ENCODE measurements at regions of chr10 and their contacts with region 1.

Region 1: DNA sequence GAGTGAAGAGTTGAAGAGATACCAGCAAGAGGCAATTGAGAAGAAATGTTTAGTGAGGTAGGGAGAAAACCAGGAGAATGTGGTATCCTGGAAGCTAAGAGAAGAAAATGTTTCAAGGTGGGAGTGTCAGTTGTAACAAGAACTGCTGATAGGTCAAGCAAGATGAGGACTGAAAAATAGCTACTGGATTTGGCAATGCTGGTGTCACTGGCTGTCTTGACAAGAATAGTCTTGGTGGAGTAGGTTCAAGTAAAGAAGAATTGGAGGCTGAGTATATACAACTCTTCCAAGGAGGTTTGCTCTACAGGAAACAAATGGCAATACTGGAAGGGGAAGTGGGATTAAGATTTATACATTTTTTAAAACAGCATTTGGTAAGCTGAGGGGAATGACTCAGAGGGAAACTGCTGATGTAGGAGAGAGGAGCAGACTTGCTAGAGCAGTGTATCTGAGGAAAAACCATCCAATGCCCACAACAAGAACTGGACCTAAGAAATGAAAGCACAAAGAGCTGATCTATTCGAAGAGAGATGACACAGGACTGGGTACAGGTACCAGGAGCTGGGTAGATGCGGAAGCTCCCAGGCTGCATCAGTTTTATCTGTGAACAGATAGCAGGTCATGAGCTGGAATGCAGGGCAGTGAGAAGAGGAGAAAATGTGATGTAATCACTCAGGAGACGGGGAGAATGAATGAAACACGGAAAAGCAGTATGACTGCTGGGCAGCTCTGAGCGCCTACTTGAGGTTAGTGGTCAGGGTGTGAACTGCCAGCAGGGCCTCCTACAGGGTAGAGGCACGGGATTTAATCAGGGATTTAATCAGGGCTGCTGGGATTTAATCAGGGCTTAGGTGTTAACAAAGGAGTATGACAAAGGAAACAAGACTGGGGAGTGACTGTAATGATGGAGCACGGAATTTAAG is 34.5 kb downstream of the FAM25A start:
- DNase-seq: peak; percentile 85
- ATAC-seq: peak; percentile 95
- H3K4me3 ChIP-seq: no peak overlapping the region
- H3K27ac ChIP-seq: peak overlapping the region; percentile 44
- H3K4me1 ChIP-seq: peaks cover 9% of the 10 kb centered on the region
- H3K27me3 ChIP-seq: no peaks in the 10 kb centered on the region
- CTCF ChIP-seq: peak; percentile 46
- POLR2A ChIP-seq: no peak
- RAD21 ChIP-seq: peak; percentile 56

Region 2: GRCh38 chr10:86744067-86744725 is 310.4 kb before region 1 on chr10:
- CTCF ChIA-PET with region 1: no interaction called
- POLR2A ChIA-PET with region 1: no interaction called
- dilution Hi-C with region 1: no loop called
- in situ Hi-C with region 1: no loop called
- intact Hi-C with region 1: no loop called
- DNase-seq: no peak
- ATAC-seq: peak; percentile 25; the same call in 1 of the 2 replicates
- H3K4me3 ChIP-seq: no peak overlapping the region
- H3K27ac ChIP-seq: no peak overlapping the region
- H3K4me1 ChIP-seq: peaks cover 3% of the 10 kb centered on the region
- H3K27me3 ChIP-seq: no peaks in the 10 kb centered on the region
- CTCF ChIP-seq: no peak
- POLR2A ChIP-seq: no peak
- RAD21 ChIP-seq: no peak

Region 3: GRCh38 chr10:86918022-86918471 is 136.6 kb before region 1 on chr10:
- CTCF ChIA-PET with region 1: interaction called, 10 read pairs
- POLR2A ChIA-PET with region 1: no interaction called
- dilution Hi-C with region 1: no loop called
- in situ Hi-C with region 1: no loop called
- intact Hi-C with region 1: no loop called
- DNase-seq: peak; percentile 77
- ATAC-seq: peak; percentile 89
- H3K4me3 ChIP-seq: no peak overlapping the region
- H3K27ac ChIP-seq: peak overlapping the region; percentile 58
- H3K4me1 ChIP-seq: peaks cover 5% of the 10 kb centered on the region
- H3K27me3 ChIP-seq: no peaks in the 10 kb centered on the region
- CTCF ChIP-seq: no peak
- POLR2A ChIP-seq: no peak
- RAD21 ChIP-seq: no peak

Region 4: DNA sequence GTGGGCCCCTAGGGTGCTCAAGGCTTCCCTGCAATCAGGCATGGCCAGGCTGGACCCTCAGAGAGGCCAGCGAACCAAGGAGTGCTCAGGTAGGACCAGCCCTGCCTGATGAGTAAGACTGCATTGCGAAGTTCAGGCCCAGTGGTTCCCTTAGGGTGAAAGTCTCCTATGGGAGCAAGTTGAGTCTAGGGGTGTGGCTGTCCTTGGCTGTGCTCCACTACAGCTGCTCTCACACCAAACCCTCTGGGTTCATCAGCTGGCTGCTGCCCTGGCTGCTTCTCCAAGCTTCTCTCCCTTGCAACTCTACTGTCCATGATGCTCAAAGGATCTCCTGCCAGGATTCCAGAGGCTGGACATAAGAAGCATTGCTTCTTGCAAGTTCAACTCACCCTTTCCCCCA is 15.8 kb before region 1 on chr10:
- CTCF ChIA-PET with region 1: no interaction called
- POLR2A ChIA-PET with region 1: no interaction called
- dilution Hi-C with region 1: no loop called
- in situ Hi-C with region 1: no loop called
- intact Hi-C with region 1: no loop called
- DNase-seq: no peak
- ATAC-seq: no peak
- H3K4me3 ChIP-seq: no peak overlapping the region
- H3K27ac ChIP-seq: no peak overlapping the region
- H3K4me1 ChIP-seq: no peaks in the 10 kb centered on the region
- H3K27me3 ChIP-seq: no peaks in the 10 kb centered on the region; the same call in 1 of the 2 replicates
- CTCF ChIP-seq: no peak
- POLR2A ChIP-seq: no peak
- RAD21 ChIP-seq: no peak

Region 5: DNA sequence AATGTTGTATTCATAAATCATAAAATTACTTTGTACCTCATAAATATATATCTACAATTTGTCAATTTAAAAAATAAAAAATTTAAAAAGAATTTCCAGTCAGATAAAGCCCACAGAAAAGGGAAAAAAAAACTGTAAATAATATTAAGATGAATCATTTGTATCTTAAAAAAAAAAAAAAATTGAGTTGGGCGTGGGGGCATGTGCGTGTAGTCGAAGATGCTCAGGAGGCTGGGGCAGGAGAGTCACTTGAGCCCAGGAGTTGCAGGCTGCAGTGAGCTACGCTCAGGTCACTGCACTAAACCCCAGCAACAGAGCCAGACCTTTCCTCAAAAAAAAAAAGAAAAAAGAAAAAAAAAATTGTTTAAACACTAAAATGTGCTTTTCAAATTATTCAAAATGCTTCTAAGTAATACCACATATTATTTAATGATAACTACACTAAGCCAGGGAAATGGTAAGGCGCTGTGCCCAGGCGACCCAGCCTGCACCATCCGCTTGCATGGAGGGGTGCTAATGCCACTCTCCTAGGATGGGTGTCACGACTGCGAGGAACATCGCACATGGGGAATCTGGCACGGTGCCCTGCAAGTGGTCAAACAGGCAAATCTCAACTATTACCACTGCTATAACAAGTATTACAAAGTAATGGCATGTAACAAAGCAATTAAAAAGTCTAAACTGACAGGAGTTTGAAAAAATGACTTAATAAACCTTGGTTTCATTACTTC is 24.6 kb after region 1 on chr10:
- CTCF ChIA-PET with region 1: no interaction called
- POLR2A ChIA-PET with region 1: no interaction called
- dilution Hi-C with region 1: no loop called
- in situ Hi-C with region 1: no loop called
- intact Hi-C with region 1: no loop called
- DNase-seq: no peak
- ATAC-seq: no peak
- H3K4me3 ChIP-seq: no peak overlapping the region
- H3K27ac ChIP-seq: no peak overlapping the region
- H3K4me1 ChIP-seq: peaks cover 4% of the 10 kb centered on the region
- H3K27me3 ChIP-seq: no peaks in the 10 kb centered on the region
- CTCF ChIP-seq: no peak
- POLR2A ChIP-seq: no peak
- RAD21 ChIP-seq: no peak

Measured in IMR-90 (cell line).